ENCODE measurements at regions of chr7 and their contacts with region 1.

Region 1: GRCh38 chr7:132066761-132067171 is 509.5 kb downstream of the PLXNA4 start:
- DNase-seq: peak in 4 of 5 donors; percentile 56 to 76 (median 66)
- ATAC-seq: peak; percentile 45 to 73 (median 67)
- H3K4me3 ChIP-seq: no peak overlapping the region
- H3K27ac ChIP-seq: peak overlapping the region; percentile 71 to 97 (median 86)
- H3K4me1 ChIP-seq: peaks cover 0 to 36% (median 19%) of the 10 kb centered on the region in 12 donors
- H3K27me3 ChIP-seq: no peaks in the 10 kb centered on the region
- CTCF ChIP-seq: no peak
- POLR2A ChIP-seq: no peak

Region 2: DNA sequence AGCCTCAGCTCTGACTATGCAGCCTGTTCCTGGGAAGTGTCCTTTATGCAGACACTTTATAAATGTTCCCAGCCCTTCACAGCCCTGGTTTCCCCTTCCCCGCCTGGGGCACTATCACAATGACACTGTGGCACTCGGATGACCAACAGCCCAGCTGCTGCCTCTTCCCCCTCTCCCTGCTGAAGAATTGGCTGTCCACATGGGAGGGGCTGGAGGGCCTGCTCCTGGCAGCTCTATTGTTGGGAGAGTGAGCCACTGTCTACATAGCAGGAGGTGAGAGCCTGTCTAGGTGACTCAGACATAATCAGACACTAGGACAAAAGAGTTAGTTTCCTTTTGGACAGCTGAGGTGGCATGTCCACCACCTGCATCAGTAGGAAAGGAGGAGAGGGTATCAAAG is 72.1 kb after region 1 on chr7:
- intact Hi-C with region 1: no loop called
- DNase-seq: no peak
- ATAC-seq: peak in 3 of 4 donors; percentile 41 to 53 (median 45)
- H3K4me3 ChIP-seq: no peak overlapping the region
- H3K27ac ChIP-seq: no peak overlapping the region
- H3K4me1 ChIP-seq: peaks cover 0 to 25% (median 5%) of the 10 kb centered on the region in 12 donors
- H3K27me3 ChIP-seq: no peaks in the 10 kb centered on the region
- CTCF ChIP-seq: no peak
- POLR2A ChIP-seq: no peak

Region 3: GRCh38 chr7:132206594-132206993 is 139.8 kb after region 1 on chr7:
- intact Hi-C with region 1: loop called in 1 of 10 experiments (anchors 2 kb)
- DNase-seq: peak in 3 of 5 donors; percentile 35 to 39 (median 39)
- ATAC-seq: peak; percentile 29 to 69 (median 43)
- H3K4me3 ChIP-seq: no peak overlapping the region
- H3K27ac ChIP-seq: peak overlapping the region in 11 of 12 donors; percentile 17 to 92 (median 76)
- H3K4me1 ChIP-seq: peaks cover 0 to 25% (median 8%) of the 10 kb centered on the region in 12 donors
- H3K27me3 ChIP-seq: no peaks in the 10 kb centered on the region
- CTCF ChIP-seq: no peak
- POLR2A ChIP-seq: no peak

Measured in heart left ventricle (tissue), 16 donors.